Panc1 (cell line): ENCODE measurements at regions of chr17 and their contacts with region 1.

Region 1: GRCh38 chr17:42527273-42527703 is 8.8 kb upstream of the NAGLU start:
- DNase-seq: no peak
- ATAC-seq: peak; percentile 78
- H3K4me3 ChIP-seq: no peak overlapping the region
- H3K27ac ChIP-seq: peak overlapping the region; percentile 79
- H3K4me1 ChIP-seq: peaks cover 31% of the 10 kb centered on the region
- H3K27me3 ChIP-seq: no peaks in the 10 kb centered on the region
- CTCF ChIP-seq: peak; percentile 72

Region 2: DNA sequence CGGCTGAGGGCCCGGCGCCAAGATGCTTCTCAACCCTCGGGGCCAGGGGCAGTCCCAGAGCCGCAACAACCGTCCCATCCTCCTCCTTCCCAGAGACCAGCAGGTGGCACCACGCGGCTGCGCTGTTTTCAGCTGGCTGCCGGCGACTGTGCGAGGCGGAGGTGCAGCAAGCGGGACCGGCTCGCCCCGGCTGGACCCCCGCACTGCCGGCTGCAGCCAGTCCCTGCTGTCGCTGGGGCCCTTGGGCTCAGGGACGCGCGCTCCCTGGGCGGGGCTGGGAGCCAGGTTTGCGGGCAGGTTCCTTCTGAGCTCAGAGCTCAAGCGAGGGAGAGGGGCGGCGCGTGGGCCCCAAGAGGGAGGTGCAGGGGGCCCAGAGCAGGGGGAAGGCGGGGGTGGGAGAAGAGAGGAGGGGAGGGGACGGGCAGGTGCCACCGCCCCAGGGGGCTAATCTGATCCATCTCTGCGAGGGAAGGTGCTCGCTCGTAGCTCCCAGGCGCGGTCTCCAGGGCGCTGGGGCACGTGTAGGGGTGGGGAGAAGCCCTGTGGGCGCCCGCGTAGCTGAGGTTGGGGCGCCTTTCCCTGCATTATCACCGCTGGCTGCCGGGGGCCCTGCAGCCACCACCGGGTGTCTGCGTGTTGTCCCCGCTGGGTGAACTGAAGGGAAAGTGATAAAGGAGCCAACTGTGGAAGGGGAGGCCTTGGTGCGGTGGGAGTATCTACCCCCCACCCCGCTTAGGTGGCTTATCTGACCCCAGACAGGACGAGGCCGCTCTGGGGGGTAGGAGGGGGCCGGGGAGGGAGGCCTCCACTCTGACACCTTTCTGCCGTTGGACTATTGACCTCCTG is 214.8 kb before region 1 on chr17:
- CTCF ChIA-PET with region 1: no interaction called
- POLR2A ChIA-PET with region 1: no interaction called
- in situ Hi-C with region 1: no loop called
- intact Hi-C with region 1: loop called (anchors 10 kb)
- DNase-seq: no peak
- ATAC-seq: peak; percentile 78
- H3K4me3 ChIP-seq: no peak overlapping the region
- H3K27ac ChIP-seq: peak overlapping the region; percentile 84
- H3K4me1 ChIP-seq: peaks cover 55% of the 10 kb centered on the region
- H3K27me3 ChIP-seq: no peaks in the 10 kb centered on the region
- CTCF ChIP-seq: peak; percentile 72

Region 3: DNA sequence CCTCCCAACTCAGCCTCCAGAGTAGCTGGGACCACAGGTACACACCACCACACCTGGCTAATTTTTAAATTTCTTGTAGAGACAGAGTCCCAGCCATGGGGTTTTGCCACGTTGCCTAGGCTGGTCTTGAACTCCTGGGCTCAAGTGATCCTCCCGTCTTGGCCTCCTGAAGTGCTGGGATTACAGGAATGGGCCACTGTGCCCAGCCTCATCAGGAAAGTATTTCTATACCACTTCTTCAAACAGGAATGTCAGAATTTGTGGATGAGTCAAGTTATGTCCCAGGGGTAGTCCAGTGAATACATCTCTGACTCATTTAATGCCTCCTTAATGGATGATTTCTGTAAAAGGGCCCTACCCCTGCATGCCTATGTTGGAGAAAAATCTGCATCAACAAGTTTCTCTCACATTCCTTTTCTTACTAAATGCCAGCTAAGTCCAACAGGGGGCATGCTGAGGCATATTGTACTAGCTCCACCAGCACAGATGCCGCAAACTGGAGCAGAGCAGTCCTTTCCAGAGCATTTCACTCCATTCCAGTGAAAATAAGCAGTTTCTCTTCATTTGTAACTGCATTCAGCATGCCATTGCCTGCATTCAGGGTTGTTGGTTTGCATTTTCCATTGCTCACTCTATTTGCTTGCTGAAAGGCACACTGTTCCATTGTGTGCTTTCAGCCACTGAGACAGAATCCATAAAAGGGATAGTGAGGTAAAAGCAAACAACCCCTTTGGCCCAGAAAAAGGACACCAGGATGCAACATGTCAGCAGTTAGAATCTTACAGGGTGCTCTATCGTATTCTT is 98.9 kb before region 1 on chr17:
- CTCF ChIA-PET with region 1: no interaction called
- POLR2A ChIA-PET with region 1: interaction called, 3 read pairs
- in situ Hi-C with region 1: no loop called
- intact Hi-C with region 1: loop called (anchors 10 kb)
- DNase-seq: peak; percentile 77
- ATAC-seq: peak; percentile 83
- H3K4me3 ChIP-seq: no peak overlapping the region
- H3K27ac ChIP-seq: no peak overlapping the region
- H3K4me1 ChIP-seq: peaks cover 14% of the 10 kb centered on the region
- H3K27me3 ChIP-seq: no peaks in the 10 kb centered on the region
- CTCF ChIP-seq: peak; percentile 69